ENCODE measurements at regions of chr1 and their contacts with region 1.

Region 1: DNA sequence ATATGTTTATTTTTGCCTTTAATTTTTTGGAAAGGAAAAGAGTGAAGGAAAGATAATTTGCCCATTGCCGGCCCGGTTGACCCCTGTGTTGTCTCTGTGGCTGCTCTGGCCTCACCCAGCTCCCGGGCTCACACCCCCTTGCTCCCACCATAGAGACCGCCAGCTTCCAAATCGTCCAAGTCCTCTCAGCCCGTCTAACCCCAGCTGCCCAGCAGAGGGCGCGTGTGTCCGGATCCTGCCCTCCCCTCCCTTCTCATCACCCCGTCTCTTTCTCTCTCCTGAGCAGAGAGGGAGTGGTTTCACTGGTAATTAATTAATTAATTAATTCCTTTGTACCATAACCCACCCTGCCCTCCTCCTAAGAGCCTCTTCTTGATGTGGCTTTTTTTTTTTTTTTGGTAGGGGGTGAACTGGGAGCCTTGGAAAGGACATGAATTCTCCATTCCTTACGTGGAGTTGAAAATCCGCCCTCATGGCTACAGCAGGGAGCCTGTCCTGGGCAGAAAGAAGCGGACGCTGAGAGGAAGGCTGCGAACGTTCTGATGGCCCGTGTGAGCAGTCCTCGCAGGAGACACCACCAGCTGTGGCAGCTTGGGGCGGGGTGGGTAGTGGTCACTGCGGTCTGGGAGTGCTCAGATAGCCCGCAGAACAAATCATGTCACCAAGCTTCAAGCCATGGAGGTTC is 45.9 kb downstream of the KIAA0040 start:
- DNase-seq: no peak
- H3K4me3 ChIP-seq: no peak overlapping the region
- CTCF ChIP-seq: peak; percentile 94

Region 2: DNA sequence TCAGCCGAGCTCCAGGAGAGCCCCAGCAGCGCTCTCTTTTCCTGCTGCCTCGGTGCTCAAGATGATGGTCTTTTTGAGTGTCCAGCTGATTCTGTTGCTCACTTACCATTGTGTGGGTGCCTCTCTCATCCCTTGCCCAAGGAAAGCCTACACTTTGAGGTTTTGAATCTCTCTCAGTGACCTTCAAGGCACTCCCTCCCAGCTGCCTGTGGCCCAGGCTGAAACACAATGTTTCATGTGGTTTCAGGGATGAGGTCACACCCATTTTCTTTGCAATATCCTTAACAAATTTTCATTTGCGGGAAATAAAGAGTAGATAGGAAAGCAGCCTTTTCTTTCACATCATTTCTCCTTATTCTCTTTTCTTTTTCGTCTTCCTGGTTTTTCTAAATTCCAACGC is 110.8 kb before region 1 on chr1:
- CTCF ChIA-PET with region 1: interaction called, 38 read pairs
- POLR2A ChIA-PET with region 1: no interaction called
- DNase-seq: no peak
- H3K4me3 ChIP-seq: no peak overlapping the region
- CTCF ChIP-seq: no peak

Region 3: GRCh38 chr1:175129997-175130648 is 16.5 kb before region 1 on chr1:
- CTCF ChIA-PET with region 1: interaction called, 20 read pairs
- POLR2A ChIA-PET with region 1: no interaction called
- DNase-seq: no peak
- H3K4me3 ChIP-seq: no peak overlapping the region
- CTCF ChIP-seq: no peak

Measured in AG04449 (cell line).